Heart left ventricle (tissue), 16 donors: ENCODE measurements at regions of chr18 and their contacts with region 1.

Region 1: DNA sequence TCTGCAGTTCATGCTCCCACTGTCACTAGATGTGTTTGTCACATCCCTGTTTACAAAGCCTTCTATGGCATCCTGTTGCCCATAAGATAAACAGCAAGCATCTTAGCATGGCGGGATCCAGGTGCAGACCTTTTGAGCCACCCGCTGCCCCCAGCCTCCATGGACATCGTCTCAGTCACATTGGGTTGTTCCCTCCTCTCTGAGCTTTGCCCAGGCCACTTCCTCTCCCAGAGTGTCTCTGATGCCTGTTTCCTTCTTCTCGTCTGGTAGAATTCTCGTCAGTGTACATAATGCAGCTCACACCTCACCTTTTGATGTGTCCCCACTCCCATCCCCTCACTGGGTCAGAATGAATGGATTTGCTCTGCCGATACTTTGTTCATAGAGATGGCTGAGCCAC is 239.0 kb upstream of the APCDD1 start:
- DNase-seq: no peak
- ATAC-seq: no peak
- H3K4me3 ChIP-seq: no peak overlapping the region
- H3K27ac ChIP-seq: no peak overlapping the region
- H3K4me1 ChIP-seq: peaks cover 0 to 12% (median 0%) of the 10 kb centered on the region in 12 donors
- H3K27me3 ChIP-seq: no peaks in the 10 kb centered on the region
- CTCF ChIP-seq: no peak
- POLR2A ChIP-seq: no peak

Region 2: DNA sequence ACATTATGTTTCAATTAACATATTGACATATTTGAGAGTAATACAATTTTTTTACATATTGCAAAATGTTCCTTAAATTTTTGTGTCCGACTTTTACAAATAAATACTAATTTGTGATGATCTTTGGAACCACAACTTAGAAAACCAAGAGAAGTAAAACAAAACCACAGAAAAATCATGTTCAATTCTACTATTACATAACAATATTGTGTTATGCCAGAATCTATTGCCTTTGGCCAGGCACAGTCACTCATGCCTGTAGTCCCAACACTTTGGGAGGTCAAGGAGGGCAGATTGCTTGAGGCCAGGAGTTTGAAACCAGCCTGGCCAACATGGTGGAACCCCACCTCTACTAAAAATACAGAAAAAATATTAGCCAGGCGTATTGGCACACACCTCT is 146.2 kb after region 1 on chr18:
- intact Hi-C with region 1: loop called in 1 of 10 experiments (anchors 5 kb)
- DNase-seq: no peak
- ATAC-seq: no peak
- H3K4me3 ChIP-seq: no peak overlapping the region
- H3K27ac ChIP-seq: no peak overlapping the region
- H3K4me1 ChIP-seq: no peaks in the 10 kb centered on the region
- H3K27me3 ChIP-seq: no peaks in the 10 kb centered on the region
- CTCF ChIP-seq: no peak
- POLR2A ChIP-seq: no peak

Region 3: DNA sequence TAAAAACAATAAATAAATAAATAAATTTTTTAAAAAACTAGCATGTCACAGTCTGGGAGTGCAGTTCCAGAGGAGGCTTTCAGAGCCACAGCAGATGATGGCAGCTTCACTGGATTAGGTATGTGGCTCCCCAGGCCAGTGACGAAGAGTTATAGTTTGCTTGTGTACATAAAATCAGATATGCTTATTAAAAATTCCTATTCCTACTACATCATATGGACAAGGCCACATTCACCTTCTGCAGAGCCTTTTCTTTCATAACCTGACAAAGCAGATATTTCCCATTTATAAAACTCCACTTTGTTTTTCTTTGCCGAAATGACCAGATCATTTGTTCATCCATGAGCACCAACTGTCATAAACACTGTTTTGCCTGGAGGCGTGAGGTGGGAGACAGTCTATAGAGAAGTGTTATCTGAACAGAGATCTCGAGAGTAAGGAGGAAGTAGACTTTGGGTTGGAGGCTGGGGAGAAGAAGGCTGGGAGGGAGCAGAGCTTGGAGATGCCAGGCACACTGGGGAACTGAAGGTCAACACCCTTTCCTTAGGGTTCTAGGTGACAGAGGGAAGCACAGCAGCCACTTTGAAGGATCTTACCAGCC is 479.5 kb after region 1 on chr18:
- intact Hi-C with region 1: no loop called
- DNase-seq: no peak
- ATAC-seq: no peak
- H3K4me3 ChIP-seq: no peak overlapping the region
- H3K27ac ChIP-seq: no peak overlapping the region
- H3K4me1 ChIP-seq: no peaks in the 10 kb centered on the region
- H3K27me3 ChIP-seq: no peaks in the 10 kb centered on the region
- CTCF ChIP-seq: no peak
- POLR2A ChIP-seq: no peak